ENCODE measurements at regions of chr16 and their contacts with region 1.

Region 1: DNA sequence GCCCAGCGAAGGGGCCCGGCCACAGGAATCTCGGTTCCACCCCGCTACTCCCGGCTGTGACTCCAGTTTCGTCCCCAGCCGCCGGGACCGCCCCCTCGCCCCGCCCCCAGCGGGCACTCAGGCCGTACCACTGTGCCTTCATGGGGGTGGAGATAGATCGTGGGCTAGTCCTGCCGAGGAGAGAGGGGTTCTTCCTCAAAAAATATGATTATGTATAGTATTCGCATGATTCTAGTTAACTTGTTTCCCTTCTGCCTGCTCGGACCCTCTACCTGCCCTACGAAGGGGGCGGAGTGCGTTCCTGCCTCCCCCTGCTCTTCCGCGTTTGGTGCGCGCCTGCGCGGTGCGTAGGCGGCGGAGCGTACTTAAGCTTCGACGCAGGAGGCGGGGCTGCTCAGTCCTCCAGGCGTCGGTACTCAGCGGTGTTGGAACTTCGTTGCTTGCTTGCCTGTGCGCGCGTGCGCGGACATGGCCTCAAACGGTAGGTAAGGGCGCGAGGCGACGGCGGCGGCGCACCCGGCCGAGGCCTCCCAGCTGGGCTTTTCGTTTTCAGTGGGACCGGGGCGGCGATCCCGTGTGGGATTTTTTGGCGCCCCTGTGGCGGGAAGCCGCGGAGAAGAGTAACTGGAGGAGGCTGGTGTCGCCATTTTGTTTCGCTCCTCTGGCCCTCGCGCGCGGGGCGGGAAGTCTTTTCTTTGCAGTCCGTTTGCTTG is at the start of gene FUS:
- DNase-seq: peak; percentile 89
- H3K4me3 ChIP-seq: peak within 1 kb of the TSS; percentile 98
- CTCF ChIP-seq: no peak

Region 2: DNA sequence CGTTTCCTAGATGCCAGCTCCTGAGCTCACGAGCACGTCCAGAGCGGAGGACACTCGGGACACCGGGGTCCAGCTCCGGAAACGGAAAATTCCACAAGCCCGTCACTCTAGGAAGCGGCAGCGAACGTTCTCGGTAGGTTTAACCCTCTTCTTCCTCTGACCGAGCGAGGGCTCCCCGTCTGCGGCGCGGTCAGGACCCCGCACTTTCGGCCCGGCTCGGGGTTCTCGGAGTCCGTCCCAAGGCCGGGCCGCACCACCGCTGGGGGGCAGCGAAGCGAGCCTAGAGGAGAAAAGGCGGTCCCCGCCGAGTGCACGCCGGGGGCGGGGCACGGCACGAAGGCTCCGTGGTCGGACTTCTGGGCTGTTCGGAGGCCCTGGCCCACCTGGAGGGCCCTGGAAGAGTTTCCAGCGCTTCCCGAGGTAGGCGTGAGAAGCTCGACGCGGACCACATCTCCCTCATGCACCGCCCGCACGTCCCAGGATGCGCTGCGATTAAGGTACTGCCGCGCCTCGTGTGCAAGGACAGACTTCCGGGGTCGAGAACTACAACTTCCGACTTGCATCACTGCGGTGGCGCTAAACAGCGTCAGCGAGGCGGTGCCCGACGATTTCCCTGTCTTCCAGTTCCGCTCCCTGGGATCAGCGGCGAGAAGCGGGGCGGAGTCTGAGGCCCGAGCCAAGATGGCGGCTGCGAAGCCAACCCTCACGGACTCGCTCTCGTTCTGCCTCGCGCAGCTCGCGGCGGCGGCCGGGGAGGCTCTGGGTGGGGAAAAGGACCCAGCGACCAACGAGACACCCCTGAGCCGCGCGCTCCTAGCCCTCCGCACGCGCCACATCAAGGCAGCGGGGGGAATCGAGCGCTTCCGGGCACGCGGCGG is 279.2 kb after region 1 on chr16 and contains the start of gene ARMC5:
- in situ Hi-C with region 1: loop called (anchors 25 kb)
- DNase-seq: peak; percentile 99
- H3K4me3 ChIP-seq: peak within 1 kb of the TSS; percentile 62
- CTCF ChIP-seq: peak; percentile 62

Measured in astrocyte of the spinal cord (primary cell).